Activated CD4-positive, alpha-beta T cell treated with anti-CD3 and anti-CD28 coated beads for 36 hours (primary cell): ENCODE measurements at regions of chr7 and their contacts with region 1.

Region 1: GRCh38 chr7:114789871-114790311 is 132.0 kb upstream of the MDFIC start:
- DNase-seq: no peak
- ATAC-seq: peak; percentile 42
- H3K4me3 Mint-ChIP-seq: no peak overlapping the region
- H3K27ac Mint-ChIP-seq: peak overlapping the region; percentile 29
- H3K4me1 Mint-ChIP-seq: peaks cover 55% of the 10 kb centered on the region
- H3K27me3 Mint-ChIP-seq: peaks cover 6% of the 10 kb centered on the region

Region 2: DNA sequence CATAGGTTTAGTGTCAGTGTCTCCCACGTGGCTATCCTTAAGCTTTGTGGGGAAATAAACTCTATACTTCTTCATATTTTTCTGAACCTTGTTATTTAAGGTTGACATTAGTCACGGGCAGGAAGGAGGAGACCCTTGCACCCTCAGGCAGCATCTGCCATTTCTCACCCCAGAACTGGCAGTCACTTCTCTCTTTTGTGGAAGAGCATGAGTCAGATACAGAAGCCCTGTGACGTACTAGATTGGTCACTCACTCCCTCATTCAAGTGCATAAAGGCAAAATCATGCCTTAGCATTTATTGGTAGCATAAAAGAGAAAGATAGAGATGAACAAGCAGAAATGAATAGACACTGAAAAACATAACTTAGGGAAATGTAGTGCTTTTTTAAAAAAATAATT is 74.0 kb before region 1 on chr7:
- CTCF ChIA-PET with region 1: no interaction called
- POLR2A ChIA-PET with region 1: no interaction called
- intact Hi-C with region 1: loop called in 1 of 2 experiments (anchors 5 kb)
- DNase-seq: peak; percentile 19
- ATAC-seq: peak; percentile 81
- H3K4me3 Mint-ChIP-seq: no peak overlapping the region
- H3K27ac Mint-ChIP-seq: no peak overlapping the region
- H3K4me1 Mint-ChIP-seq: peaks cover 7% of the 10 kb centered on the region
- H3K27me3 Mint-ChIP-seq: peaks cover 5% of the 10 kb centered on the region

Region 3: DNA sequence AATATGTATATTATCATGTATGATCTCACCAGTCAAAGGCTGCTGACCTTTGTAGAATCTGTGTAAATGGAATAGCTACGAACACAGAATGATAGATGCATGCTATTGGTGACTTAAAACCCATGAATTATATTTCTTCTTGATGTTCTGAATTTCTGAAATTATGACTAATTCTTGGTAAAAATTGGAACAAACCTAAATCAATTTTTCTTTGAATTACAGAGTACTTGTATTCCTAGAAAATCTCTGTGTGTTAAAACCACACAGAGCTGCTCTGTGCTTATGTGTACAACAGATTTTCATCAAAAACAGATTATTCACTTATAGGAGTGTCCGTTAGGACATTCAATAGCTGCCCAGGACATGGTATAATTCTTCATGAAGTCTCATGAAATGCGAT is 23.7 kb after region 1 on chr7:
- CTCF ChIA-PET with region 1: no interaction called
- POLR2A ChIA-PET with region 1: no interaction called
- intact Hi-C with region 1: no loop called
- DNase-seq: no peak
- ATAC-seq: peak; percentile 59
- H3K4me3 Mint-ChIP-seq: no peak overlapping the region
- H3K27ac Mint-ChIP-seq: no peak overlapping the region
- H3K4me1 Mint-ChIP-seq: peaks cover 25% of the 10 kb centered on the region
- H3K27me3 Mint-ChIP-seq: peaks cover 5% of the 10 kb centered on the region

Region 4: DNA sequence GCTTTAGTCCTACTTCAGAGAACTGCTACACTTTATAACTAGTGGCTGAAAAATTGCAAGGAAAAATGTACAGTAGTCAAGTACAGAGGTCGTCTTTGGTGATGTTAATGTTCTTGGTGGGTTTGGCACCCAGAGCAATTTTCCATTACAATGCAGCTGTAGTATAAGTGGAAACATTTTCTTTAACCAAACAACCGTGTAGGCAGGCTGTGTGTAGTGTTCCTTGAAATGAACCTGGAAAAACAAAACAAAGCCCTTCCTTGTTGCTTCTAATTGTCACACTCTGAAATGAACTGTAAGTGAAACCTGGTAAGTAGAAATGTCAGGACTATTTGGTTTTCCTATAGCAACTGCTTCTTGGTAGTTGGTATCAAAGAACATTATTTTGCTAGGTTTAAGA is 388.9 kb after region 1 on chr7:
- CTCF ChIA-PET with region 1: no interaction called
- POLR2A ChIA-PET with region 1: no interaction called
- intact Hi-C with region 1: no loop called
- DNase-seq: no peak
- ATAC-seq: no peak
- H3K4me3 Mint-ChIP-seq: no peak overlapping the region
- H3K27ac Mint-ChIP-seq: no peak overlapping the region
- H3K4me1 Mint-ChIP-seq: peaks cover 7% of the 10 kb centered on the region
- H3K27me3 Mint-ChIP-seq: peaks cover under 1% of the 10 kb centered on the region